Endothelial cell of umbilical vein (primary cell): ENCODE measurements at regions of chr17 and their contacts with region 1.

Region 1: GRCh38 chr17:44210342-44211192 is 8.9 kb downstream of the UBTF start:
- DNase-seq: peak; percentile 89
- H3K4me3 ChIP-seq: no peak overlapping the region
- H3K27ac ChIP-seq: no peak overlapping the region
- H3K4me1 ChIP-seq: peaks cover 5% of the 10 kb centered on the region
- H3K27me3 ChIP-seq: no peaks in the 10 kb centered on the region
- CTCF ChIP-seq: peak; percentile 99
- POLR2A ChIP-seq: no peak

Region 2: GRCh38 chr17:44230140-44230539 is 19.6 kb after region 1 on chr17:
- CTCF ChIA-PET with region 1: no interaction called
- POLR2A ChIA-PET with region 1: no interaction called
- dilution Hi-C with region 1: no loop called
- intact Hi-C with region 1: no loop called
- DNase-seq: no peak
- H3K4me3 ChIP-seq: no peak overlapping the region
- H3K27ac ChIP-seq: no peak overlapping the region
- H3K4me1 ChIP-seq: peaks cover 7% of the 10 kb centered on the region
- H3K27me3 ChIP-seq: no peaks in the 10 kb centered on the region
- CTCF ChIP-seq: no peak
- POLR2A ChIP-seq: no peak

Region 3: GRCh38 chr17:44315760-44316731 is 105.5 kb after region 1 on chr17:
- CTCF ChIA-PET with region 1: interaction called, 27 read pairs
- POLR2A ChIA-PET with region 1: no interaction called
- dilution Hi-C with region 1: no loop called
- intact Hi-C with region 1: no loop called
- DNase-seq: no peak
- H3K4me3 ChIP-seq: no peak overlapping the region
- H3K27ac ChIP-seq: no peak overlapping the region
- H3K4me1 ChIP-seq: no peaks in the 10 kb centered on the region
- H3K27me3 ChIP-seq: peaks cover 23 to 35% of the 10 kb centered on the region in 2 experiments
- CTCF ChIP-seq: no peak
- POLR2A ChIP-seq: no peak

Region 4: GRCh38 chr17:44331249-44331760 is 120.7 kb after region 1 on chr17:
- CTCF ChIA-PET with region 1: interaction called, 58 read pairs
- POLR2A ChIA-PET with region 1: interaction called, 3 read pairs
- dilution Hi-C with region 1: no loop called
- intact Hi-C with region 1: loop called (anchors 1 kb)
- DNase-seq: peak; percentile 80
- H3K4me3 ChIP-seq: no peak overlapping the region
- H3K27ac ChIP-seq: no peak overlapping the region
- H3K4me1 ChIP-seq: no peaks in the 10 kb centered on the region
- H3K27me3 ChIP-seq: no peaks in the 10 kb centered on the region
- CTCF ChIP-seq: peak; percentile 68 to 72
- POLR2A ChIP-seq: no peak

Region 5: DNA sequence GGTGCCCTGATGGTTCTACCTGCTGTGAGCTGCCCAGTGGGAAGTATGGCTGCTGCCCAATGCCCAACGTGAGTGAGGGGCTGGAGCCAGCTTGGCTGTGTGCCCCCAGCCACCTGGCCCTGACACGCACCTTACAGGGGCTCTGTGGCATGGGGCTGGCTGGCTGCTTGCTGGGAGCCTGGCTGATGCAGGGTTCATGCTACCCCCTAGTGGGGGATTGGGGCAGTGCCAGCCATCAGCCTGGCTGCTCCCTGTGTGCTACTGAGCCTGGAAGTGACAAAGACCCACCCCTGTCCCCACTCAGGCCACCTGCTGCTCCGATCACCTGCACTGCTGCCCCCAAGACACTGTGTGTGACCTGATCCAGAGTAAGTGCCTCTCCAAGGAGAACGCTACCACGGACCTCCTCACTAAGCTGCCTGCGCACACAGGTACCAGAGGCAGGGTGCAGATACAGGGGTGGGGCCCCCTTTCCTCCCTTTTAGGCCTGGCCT is 140.2 kb after region 1 on chr17:
- CTCF ChIA-PET with region 1: interaction called, 37 read pairs
- POLR2A ChIA-PET with region 1: no interaction called
- dilution Hi-C with region 1: no loop called
- intact Hi-C with region 1: loop called (anchors 1 kb)
- DNase-seq: peak; percentile 64
- H3K4me3 ChIP-seq: no peak overlapping the region
- H3K27ac ChIP-seq: no peak overlapping the region
- H3K4me1 ChIP-seq: no peaks in the 10 kb centered on the region
- H3K27me3 ChIP-seq: no peaks in the 10 kb centered on the region
- CTCF ChIP-seq: peak; percentile 64 to 95
- POLR2A ChIP-seq: no peak

Region 6: GRCh38 chr17:44664867-44665266 is 454.3 kb after region 1 on chr17:
- CTCF ChIA-PET with region 1: no interaction called
- POLR2A ChIA-PET with region 1: no interaction called
- dilution Hi-C with region 1: no loop called
- intact Hi-C with region 1: no loop called
- DNase-seq: no peak
- H3K4me3 ChIP-seq: no peak overlapping the region
- H3K27ac ChIP-seq: no peak overlapping the region
- H3K4me1 ChIP-seq: no peaks in the 10 kb centered on the region
- H3K27me3 ChIP-seq: peaks cover 7 to 10% of the 10 kb centered on the region in 2 experiments
- CTCF ChIP-seq: no peak
- POLR2A ChIP-seq: no peak

Region 7: GRCh38 chr17:45648642-45649041 is 1438.1 kb after region 1 on chr17:
- CTCF ChIA-PET with region 1: no interaction called
- POLR2A ChIA-PET with region 1: no interaction called
- dilution Hi-C with region 1: no loop called
- intact Hi-C with region 1: no loop called
- DNase-seq: no peak
- H3K4me3 ChIP-seq: no peak overlapping the region
- H3K27ac ChIP-seq: no peak overlapping the region
- H3K4me1 ChIP-seq: no peaks in the 10 kb centered on the region
- H3K27me3 ChIP-seq: peaks cover 1 to 14% of the 10 kb centered on the region in 2 experiments
- CTCF ChIP-seq: peak in 1 of 2 donors; percentile 20
- POLR2A ChIP-seq: no peak